Endothelial cell of umbilical vein (primary cell): ENCODE measurements at regions of chr12 and their contacts with region 1.

Region 1: GRCh38 chr12:116737774-116738700 is at the starts of genes RNFT2 and SPRING1:
- DNase-seq: peak; percentile 99
- H3K4me3 ChIP-seq: peak within 1 kb of the TSS; percentile 39 to 98 (median 66)
- H3K27ac ChIP-seq: peak within 1 kb of the TSS; percentile 24
- H3K4me1 ChIP-seq: peaks cover 10% of the 10 kb centered on the region
- H3K27me3 ChIP-seq: no peaks in the 10 kb centered on the region
- CTCF ChIP-seq: no peak
- POLR2A ChIP-seq: peak; percentile 96
- total RNA-seq, gene RNFT2: 5.1 and 6.6 TPM in 2 replicates
- total RNA-seq, gene SPRING1: 40.4 and 50.0 TPM in 2 replicates

Region 2: DNA sequence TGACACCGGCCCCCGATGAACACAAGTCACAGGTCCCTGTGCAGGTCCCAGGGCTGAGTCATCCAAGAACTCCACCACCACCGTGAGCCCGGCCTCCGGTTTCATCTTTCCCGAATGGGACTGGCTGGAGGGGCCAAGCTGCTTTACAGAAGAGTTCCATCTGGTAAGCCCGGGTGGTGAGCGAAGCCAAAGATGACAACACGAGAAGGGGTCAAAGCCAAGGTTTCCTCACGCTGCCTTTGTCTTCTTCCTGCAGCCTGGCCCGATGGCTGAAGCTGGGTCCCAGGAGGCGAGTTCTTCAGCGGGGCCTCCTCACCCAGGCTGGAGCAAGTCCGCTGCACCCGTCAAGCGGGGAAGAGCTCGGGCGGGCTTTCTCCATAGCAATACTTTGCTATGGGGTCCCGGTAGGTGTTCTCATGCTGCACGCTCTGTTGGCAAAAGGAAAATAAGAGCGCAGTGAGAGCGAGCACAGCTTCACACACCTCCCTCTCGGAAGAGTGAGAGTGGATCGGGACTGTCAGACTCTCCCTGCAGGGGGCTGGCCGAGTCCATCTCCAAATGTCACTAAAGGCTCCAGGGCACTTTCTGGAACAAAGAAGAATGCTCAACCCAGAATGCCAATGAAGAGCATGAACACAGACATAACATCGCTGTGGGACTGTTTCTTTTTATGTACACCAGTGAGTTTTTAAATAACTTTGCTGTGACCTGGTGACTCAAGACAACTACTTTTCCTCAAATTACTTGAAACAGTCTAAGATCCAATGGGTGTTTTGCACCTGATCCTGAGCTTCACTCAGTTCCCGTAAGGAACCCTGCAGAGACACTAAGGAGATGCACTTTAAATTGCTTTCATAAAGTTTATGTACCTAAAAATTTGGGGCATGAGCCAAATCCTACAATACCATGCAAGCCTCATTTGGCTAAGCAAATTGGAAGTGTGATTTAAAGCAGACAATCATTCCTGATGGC is 20.3 kb before region 1 on chr12:
- CTCF ChIA-PET with region 1: interaction called, 3 read pairs
- POLR2A ChIA-PET with region 1: no interaction called
- dilution Hi-C with region 1: no loop called
- intact Hi-C with region 1: loop called (anchors 2 kb)
- DNase-seq: no peak
- H3K4me3 ChIP-seq: no peak overlapping the region
- H3K27ac ChIP-seq: peak overlapping the region; percentile 66
- H3K4me1 ChIP-seq: peaks cover 19% of the 10 kb centered on the region
- H3K27me3 ChIP-seq: no peaks in the 10 kb centered on the region
- CTCF ChIP-seq: no peak
- POLR2A ChIP-seq: no peak

Region 3: GRCh38 chr12:116773276-116773731 is 35.3 kb after region 1 on chr12:
- CTCF ChIA-PET with region 1: interaction called, 5 read pairs
- POLR2A ChIA-PET with region 1: no interaction called
- dilution Hi-C with region 1: no loop called
- intact Hi-C with region 1: loop called (anchors 1 kb)
- DNase-seq: peak; percentile 87
- H3K4me3 ChIP-seq: no peak overlapping the region
- H3K27ac ChIP-seq: peak overlapping the region; percentile 24
- H3K4me1 ChIP-seq: peaks cover 18% of the 10 kb centered on the region
- H3K27me3 ChIP-seq: no peaks in the 10 kb centered on the region
- CTCF ChIP-seq: peak; percentile 15 to 32
- POLR2A ChIP-seq: no peak

Region 4: DNA sequence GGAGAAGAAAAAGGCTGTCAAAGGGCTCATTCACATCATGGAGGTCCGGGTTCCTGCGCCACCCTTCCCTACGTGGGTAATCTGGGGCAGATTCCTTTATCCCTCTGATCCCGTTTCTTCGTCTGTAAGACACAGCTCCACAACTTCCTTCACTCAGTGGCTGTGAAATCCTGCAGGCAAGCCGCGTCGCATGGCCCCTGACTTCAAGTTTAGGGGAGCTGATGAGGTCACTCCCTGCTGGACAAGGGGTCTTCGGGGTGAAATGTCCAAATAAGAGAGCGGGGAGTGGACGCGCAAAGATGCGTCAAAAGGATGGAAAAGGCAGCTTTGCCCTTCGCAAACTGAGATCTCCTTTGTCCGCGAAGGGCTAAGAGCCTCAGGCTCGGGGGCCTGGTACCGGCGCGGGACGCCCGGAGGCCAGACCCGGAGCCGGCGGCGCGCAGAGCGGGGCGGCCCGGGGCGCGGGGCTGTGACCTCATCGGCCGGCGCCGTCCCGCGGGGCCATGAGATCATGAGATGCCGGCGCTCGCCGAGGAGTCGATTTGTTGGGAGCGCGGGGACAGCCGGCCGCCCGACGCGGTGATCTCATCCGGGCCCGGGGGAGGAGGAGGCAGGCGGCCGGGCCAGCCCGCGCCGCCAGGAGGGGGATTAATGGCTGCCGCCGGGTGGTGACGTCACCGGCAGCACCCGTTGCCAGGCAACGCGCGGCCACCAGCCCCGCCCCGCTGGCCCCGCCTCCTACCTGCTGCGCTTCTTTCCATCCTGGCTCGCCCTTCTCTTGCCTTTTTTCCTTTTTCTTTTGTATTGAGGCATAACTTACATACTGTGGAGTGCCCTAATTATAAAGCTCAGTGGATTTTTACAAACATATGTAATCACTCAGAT is 81.2 kb after region 1 on chr12:
- CTCF ChIA-PET with region 1: no interaction called
- POLR2A ChIA-PET with region 1: no interaction called
- dilution Hi-C with region 1: no loop called
- intact Hi-C with region 1: loop called (anchors 1 kb)
- DNase-seq: peak; percentile 89
- H3K4me3 ChIP-seq: peak overlapping the region; percentile 62 to 84 (median 76)
- H3K27ac ChIP-seq: peak overlapping the region; percentile 86
- H3K4me1 ChIP-seq: peaks cover 13% of the 10 kb centered on the region
- H3K27me3 ChIP-seq: peaks cover 0 to 1% of the 10 kb centered on the region in 2 experiments
- CTCF ChIP-seq: no peak
- POLR2A ChIP-seq: peak; percentile 68

Region 5: DNA sequence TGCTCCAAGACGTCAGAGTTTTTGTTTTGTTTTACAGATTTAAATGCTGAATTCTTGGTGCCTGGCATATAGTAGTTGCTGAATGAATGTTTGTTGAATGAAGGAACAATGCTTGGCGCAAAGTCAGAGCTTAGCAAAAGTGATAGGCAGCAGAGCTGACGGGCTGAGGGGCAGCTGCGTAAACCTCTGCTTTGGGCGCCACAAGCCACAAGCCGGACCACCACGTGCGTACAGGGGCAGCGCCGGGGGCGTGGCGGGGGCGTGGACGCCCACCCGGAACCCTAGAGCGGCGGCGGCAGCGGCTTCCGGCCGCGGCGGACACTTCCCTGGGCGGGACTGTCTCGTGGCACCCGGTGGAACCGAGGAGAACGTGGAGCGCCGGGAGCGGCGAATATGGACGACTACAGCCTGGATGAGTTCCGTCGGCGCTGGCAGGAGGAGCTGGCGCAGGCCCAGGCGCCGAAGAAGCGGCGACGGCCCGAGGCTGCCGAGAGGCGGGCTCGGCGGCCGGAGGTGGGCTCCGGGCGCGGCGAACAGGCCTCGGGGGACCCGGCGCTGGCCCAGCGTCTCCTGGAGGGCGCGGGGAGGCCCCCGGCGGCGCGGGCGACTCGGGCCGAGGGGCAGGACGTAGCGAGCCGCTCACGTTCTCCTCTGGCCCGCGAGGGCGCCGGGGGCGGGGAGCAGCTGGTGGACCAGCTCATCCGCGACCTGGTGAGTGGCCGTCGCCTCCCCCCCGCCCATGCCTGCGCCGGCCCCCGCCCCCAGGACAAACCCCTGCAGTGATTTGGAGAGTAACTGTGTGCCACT is 172.8 kb after region 1 on chr12 and contains the start of gene FBXW8:
- CTCF ChIA-PET with region 1: no interaction called
- POLR2A ChIA-PET with region 1: no interaction called
- dilution Hi-C with region 1: no loop called
- intact Hi-C with region 1: loop called (anchors 2 kb)
- DNase-seq: peak; percentile 80
- H3K4me3 ChIP-seq: peak within 1 kb of the TSS; percentile 43 to 75 (median 67)
- H3K27ac ChIP-seq: peak within 1 kb of the TSS; percentile 53
- H3K4me1 ChIP-seq: peaks cover 5% of the 10 kb centered on the region
- H3K27me3 ChIP-seq: peaks cover 8 to 11% of the 10 kb centered on the region in 2 experiments
- CTCF ChIP-seq: no peak
- POLR2A ChIP-seq: peak; percentile 58
- total RNA-seq, gene FBXW8: 15.4 and 16.9 TPM in 2 replicates

Region 6: DNA sequence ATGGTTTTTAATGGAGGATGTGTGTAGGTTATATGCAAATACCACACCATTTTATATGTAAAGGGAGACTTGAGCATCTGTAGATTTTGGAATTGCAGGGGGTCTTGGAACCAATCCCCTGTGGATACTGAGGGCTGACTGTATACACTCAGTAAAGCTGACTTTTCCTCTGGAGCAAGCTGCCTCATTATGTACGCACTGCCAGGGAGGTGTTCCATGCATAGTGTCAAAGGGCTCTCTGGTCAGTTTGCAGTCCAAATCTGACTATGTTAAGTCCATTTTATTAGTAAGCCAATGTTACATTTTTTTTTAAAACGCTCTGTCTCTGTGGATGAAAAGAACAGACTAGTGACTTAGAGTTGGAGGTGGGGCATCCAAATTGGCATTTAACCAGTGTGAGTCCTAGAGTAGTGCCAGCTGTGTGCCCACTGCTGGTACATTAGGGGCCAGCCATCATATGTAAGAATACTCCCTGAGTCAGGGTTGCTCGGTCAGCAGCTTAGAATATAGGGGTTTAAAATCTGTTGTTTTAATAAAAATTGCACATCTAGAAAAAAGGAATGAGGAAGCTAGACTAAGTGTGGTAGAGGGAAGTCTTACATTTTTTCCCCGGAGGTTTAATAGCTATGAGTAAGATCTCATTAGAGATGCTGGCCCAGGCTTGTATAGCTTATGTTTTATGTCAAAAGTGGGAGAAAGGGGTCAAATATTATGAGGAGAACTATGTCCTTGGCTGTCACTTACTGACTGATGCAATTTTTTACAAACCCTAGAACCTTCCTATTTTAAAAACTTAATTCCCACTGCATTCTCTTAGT is 274.2 kb after region 1 on chr12:
- CTCF ChIA-PET with region 1: no interaction called
- POLR2A ChIA-PET with region 1: no interaction called
- dilution Hi-C with region 1: no loop called
- intact Hi-C with region 1: loop called (anchors 10 kb)
- DNase-seq: no peak
- H3K4me3 ChIP-seq: no peak overlapping the region
- H3K27ac ChIP-seq: no peak overlapping the region
- H3K4me1 ChIP-seq: peaks cover 13% of the 10 kb centered on the region
- H3K27me3 ChIP-seq: no peaks in the 10 kb centered on the region
- CTCF ChIP-seq: no peak
- POLR2A ChIP-seq: no peak